ENCODE measurements at regions of chr4 and their contacts with region 1.

Region 1: GRCh38 chr4:69823481-69824186 is 36.3 kb downstream of the SULT1E1 start:
- DNase-seq: peak; percentile 27 to 69 (median 50)
- ATAC-seq: peak; percentile 96
- H3K4me3 ChIP-seq: no peak overlapping the region
- H3K4me3 Mint-ChIP-seq: no peak overlapping the region
- H3K27ac ChIP-seq: no peak overlapping the region
- H3K27ac Mint-ChIP-seq: no peak overlapping the region
- H3K4me1 ChIP-seq: no peaks in the 10 kb centered on the region
- H3K4me1 Mint-ChIP-seq: peaks cover 14% of the 10 kb centered on the region
- H3K27me3 ChIP-seq: no peaks in the 10 kb centered on the region
- H3K27me3 Mint-ChIP-seq: no peaks in the 10 kb centered on the region
- CTCF ChIP-seq: peak; percentile 69

Region 2: GRCh38 chr4:69760455-69760854 is 63.2 kb before region 1 on chr4 and contains the start of gene SULT1B1:
- CTCF ChIA-PET with region 1: interaction called, 4 read pairs
- POLR2A ChIA-PET with region 1: interaction called, 13 read pairs
- intact Hi-C with region 1: loop called in 1 of 2 experiments (anchors 5 kb)
- DNase-seq: peak in 13 of 14 experiments; percentile 14 to 86 (median 58)
- ATAC-seq: peak; percentile 97
- H3K4me3 ChIP-seq: peak within 1 kb of the TSS; percentile 49
- H3K4me3 Mint-ChIP-seq: peak within 1 kb of the TSS; percentile 92
- H3K27ac ChIP-seq: peak within 1 kb of the TSS; percentile 8 to 60
- H3K27ac Mint-ChIP-seq: peak within 1 kb of the TSS; percentile 96
- H3K4me1 ChIP-seq: peaks cover 10% of the 10 kb centered on the region
- H3K4me1 Mint-ChIP-seq: peaks cover 71% of the 10 kb centered on the region
- H3K27me3 ChIP-seq: no peaks in the 10 kb centered on the region
- H3K27me3 Mint-ChIP-seq: no peaks in the 10 kb centered on the region
- CTCF ChIP-seq: no peak
- total RNA-seq, gene SULT1B1: 9.4 to 10.2 TPM

Region 3: GRCh38 chr4:70505151-70505748 is 681.6 kb after region 1 on chr4:
- CTCF ChIA-PET with region 1: no interaction called
- POLR2A ChIA-PET with region 1: no interaction called
- intact Hi-C with region 1: loop called in 1 of 2 experiments (anchors 10 kb)
- DNase-seq: peak; percentile 11 to 60 (median 32)
- ATAC-seq: peak; percentile 57
- H3K4me3 ChIP-seq: no peak overlapping the region
- H3K4me3 Mint-ChIP-seq: no peak overlapping the region
- H3K27ac ChIP-seq: no peak overlapping the region
- H3K27ac Mint-ChIP-seq: no peak overlapping the region
- H3K4me1 ChIP-seq: no peaks in the 10 kb centered on the region
- H3K4me1 Mint-ChIP-seq: no peaks in the 10 kb centered on the region
- H3K27me3 ChIP-seq: peaks cover 0 to 6% of the 10 kb centered on the region in 2 experiments
- H3K27me3 Mint-ChIP-seq: no peaks in the 10 kb centered on the region
- CTCF ChIP-seq: peak; percentile 89

Measured in CD4-positive, alpha-beta T cell (primary cell).